Activated CD4-positive, alpha-beta T cell treated with anti-CD3 and anti-CD28 coated beads for 36 hours (primary cell): ENCODE measurements at regions of chrX and their contacts with region 1.

Region 1: GRCh38 chrX:10189317-10190268 is 32.8 kb downstream of the CLCN4 start:
- DNase-seq: peak; percentile 79
- ATAC-seq: peak; percentile 73
- H3K4me3 Mint-ChIP-seq: no peak overlapping the region
- H3K27ac Mint-ChIP-seq: no peak overlapping the region
- H3K4me1 Mint-ChIP-seq: peaks cover 2% of the 10 kb centered on the region
- H3K27me3 Mint-ChIP-seq: peaks cover 2% of the 10 kb centered on the region

Region 2: DNA sequence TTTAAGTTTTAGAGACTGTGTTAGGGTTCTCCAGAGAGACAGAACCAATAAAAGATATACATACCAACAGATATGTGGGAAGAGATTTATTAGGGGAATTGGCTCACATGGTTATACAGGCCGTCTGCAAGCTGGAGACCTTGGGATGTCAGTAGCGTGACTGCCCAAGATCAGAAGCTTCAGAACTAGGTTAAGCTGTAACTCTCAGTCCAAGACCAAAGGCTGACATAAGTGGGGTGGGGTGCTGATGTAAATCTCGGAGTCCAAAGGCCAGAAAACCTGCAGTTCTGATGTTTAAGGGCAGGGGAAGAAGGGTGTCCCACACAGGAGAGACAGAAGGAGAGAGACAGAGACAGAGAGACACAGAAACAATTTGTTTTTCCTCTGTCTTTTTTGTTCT is 212.0 kb before region 1 on chrX:
- CTCF ChIA-PET with region 1: no interaction called
- POLR2A ChIA-PET with region 1: no interaction called
- intact Hi-C with region 1: no loop called
- DNase-seq: no peak
- ATAC-seq: no peak
- H3K4me3 Mint-ChIP-seq: no peak overlapping the region
- H3K27ac Mint-ChIP-seq: no peak overlapping the region
- H3K4me1 Mint-ChIP-seq: no peaks in the 10 kb centered on the region
- H3K27me3 Mint-ChIP-seq: no peaks in the 10 kb centered on the region

Region 3: GRCh38 chrX:10597871-10598270 is 408.3 kb after region 1 on chrX:
- CTCF ChIA-PET with region 1: interaction called, 6 read pairs
- POLR2A ChIA-PET with region 1: no interaction called
- intact Hi-C with region 1: loop called in 1 of 2 experiments (anchors 5 kb)
- DNase-seq: peak; percentile 5
- ATAC-seq: no peak
- H3K4me3 Mint-ChIP-seq: no peak overlapping the region
- H3K27ac Mint-ChIP-seq: no peak overlapping the region
- H3K4me1 Mint-ChIP-seq: no peaks in the 10 kb centered on the region
- H3K27me3 Mint-ChIP-seq: no peaks in the 10 kb centered on the region

Region 4: DNA sequence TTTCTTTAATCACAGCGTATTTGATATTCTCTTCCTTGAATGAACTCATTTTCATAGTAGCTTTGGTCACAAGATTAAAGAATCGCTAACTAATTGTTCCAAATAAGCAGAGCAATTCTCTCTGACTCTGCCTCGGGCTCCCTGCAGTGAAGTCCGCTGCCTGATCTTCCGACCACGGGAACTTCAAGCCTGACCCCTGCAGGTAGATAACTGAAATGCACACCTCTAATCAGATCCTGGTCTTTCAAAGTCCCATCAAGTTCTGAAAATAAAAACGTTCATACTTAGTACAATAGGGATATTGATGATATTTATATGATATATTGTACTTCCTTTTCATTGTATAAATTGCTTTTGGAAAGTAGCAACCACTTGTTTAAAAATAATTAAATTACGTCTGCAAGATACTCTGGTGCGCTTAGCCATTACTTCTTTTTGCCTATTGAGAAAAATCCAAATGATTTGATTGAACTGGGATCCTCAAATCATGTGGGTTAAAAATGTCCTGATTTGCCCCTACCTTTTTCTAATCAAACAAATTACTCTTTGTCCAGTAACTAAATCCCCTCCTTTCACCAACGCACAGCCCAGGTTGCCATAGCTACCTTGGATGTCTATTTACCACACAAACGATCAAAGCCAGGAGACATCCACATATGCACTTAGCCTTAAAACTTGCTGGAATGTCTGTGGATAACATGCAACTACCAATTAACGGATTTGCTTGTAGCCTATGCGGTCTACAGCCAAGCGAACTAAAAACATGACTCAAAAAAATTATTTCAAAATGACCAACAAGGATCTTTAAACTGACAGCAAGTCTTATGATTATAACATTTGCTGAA is 426.6 kb after region 1 on chrX:
- CTCF ChIA-PET with region 1: interaction called, 4 read pairs
- POLR2A ChIA-PET with region 1: no interaction called
- intact Hi-C with region 1: loop called (anchors 2 to 5 kb)
- DNase-seq: peak; percentile 7
- ATAC-seq: no peak
- H3K4me3 Mint-ChIP-seq: no peak overlapping the region
- H3K27ac Mint-ChIP-seq: no peak overlapping the region
- H3K4me1 Mint-ChIP-seq: peaks cover 8% of the 10 kb centered on the region
- H3K27me3 Mint-ChIP-seq: peaks cover 23% of the 10 kb centered on the region

Region 5: DNA sequence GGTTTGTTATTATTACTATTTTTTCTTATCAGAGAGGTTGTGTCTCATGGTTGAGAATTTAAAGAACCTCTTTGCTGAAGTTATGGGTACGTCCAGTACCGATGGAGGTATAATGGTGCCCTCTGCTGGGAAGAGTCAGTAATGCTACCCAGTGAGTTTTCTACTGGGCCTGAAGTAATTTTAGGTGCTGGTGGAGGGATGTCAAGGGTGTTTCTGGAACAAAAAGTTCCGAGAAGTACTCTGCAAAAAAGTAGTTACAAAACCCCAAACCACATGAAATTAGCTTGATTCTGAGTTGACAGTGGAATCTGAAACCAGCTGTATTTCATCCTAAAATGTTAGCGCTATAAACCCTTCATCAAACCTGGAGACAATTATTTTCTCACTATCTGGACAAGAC is 533.3 kb after region 1 on chrX:
- CTCF ChIA-PET with region 1: interaction called, 17 read pairs
- POLR2A ChIA-PET with region 1: no interaction called
- intact Hi-C with region 1: loop called (anchors 1 kb)
- DNase-seq: peak; percentile 47
- ATAC-seq: no peak
- H3K4me3 Mint-ChIP-seq: no peak overlapping the region
- H3K27ac Mint-ChIP-seq: no peak overlapping the region
- H3K4me1 Mint-ChIP-seq: no peaks in the 10 kb centered on the region
- H3K27me3 Mint-ChIP-seq: no peaks in the 10 kb centered on the region

Region 6: DNA sequence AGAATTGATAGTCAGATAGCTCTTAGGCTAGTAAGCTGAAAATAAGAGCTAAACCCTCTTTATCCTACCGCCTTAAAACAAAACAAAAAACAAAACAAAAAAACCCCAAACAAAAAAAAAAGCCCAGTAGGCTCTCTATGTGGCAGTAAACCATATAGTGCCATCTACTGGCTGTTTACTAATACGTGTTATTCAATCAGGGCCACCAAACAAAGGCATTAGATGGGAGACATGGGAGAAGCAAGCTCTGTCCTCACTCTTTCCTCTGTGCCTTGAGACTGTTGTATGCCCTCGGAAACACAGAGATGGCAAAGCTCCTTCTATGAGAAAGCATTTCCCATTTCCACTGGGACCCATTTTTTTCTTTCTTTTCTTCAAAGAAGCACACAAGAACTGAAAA is 579.6 kb after region 1 on chrX:
- CTCF ChIA-PET with region 1: no interaction called
- POLR2A ChIA-PET with region 1: no interaction called
- intact Hi-C with region 1: loop called in 1 of 2 experiments (anchors 1 kb)
- DNase-seq: no peak
- ATAC-seq: no peak
- H3K4me3 Mint-ChIP-seq: no peak overlapping the region
- H3K27ac Mint-ChIP-seq: no peak overlapping the region
- H3K4me1 Mint-ChIP-seq: no peaks in the 10 kb centered on the region
- H3K27me3 Mint-ChIP-seq: no peaks in the 10 kb centered on the region

Region 7: GRCh38 chrX:11137543-11138139 is 948.0 kb after region 1 on chrX:
- CTCF ChIA-PET with region 1: interaction called, 10 read pairs
- POLR2A ChIA-PET with region 1: no interaction called
- intact Hi-C with region 1: loop called in 1 of 2 experiments (anchors 1 kb)
- DNase-seq: no peak
- ATAC-seq: no peak
- H3K4me3 Mint-ChIP-seq: no peak overlapping the region
- H3K27ac Mint-ChIP-seq: no peak overlapping the region
- H3K4me1 Mint-ChIP-seq: no peaks in the 10 kb centered on the region
- H3K27me3 Mint-ChIP-seq: no peaks in the 10 kb centered on the region